HepG2 (cell line): ENCODE measurements at regions of chr6 and their contacts with region 1.

Region 1: GRCh38 chr6:131694831-131695426 is 6.3 kb downstream of the OR2A4 start:
- DNase-seq: peak; percentile 77
- ATAC-seq: peak; percentile 100
- H3K4me3 ChIP-seq: no peak overlapping the region
- H3K27ac ChIP-seq: no peak overlapping the region
- H3K4me1 ChIP-seq: no peaks in the 10 kb centered on the region
- H3K27me3 ChIP-seq: no peaks in the 10 kb centered on the region
- CTCF ChIP-seq: peak; percentile 93
- EP300 ChIP-seq: no peak
- POLR2A ChIP-seq: no peak
- RAD21 ChIP-seq: peak; percentile 91

Region 2: GRCh38 chr6:131669891-131670290 is 25.0 kb before region 1 on chr6:
- CTCF ChIA-PET with region 1: no interaction called
- POLR2A ChIA-PET with region 1: no interaction called
- in situ Hi-C with region 1: no loop called
- intact Hi-C with region 1: no loop called
- DNase-seq: no peak
- ATAC-seq: no peak
- H3K4me3 ChIP-seq: no peak overlapping the region
- H3K27ac ChIP-seq: no peak overlapping the region
- H3K4me1 ChIP-seq: no peaks in the 10 kb centered on the region
- H3K27me3 ChIP-seq: no peaks in the 10 kb centered on the region
- CTCF ChIP-seq: no peak
- EP300 ChIP-seq: no peak
- POLR2A ChIP-seq: no peak
- RAD21 ChIP-seq: no peak

Region 3: GRCh38 chr6:131787766-131788712 is 93.1 kb after region 1 on chr6:
- CTCF ChIA-PET with region 1: interaction called, 7 read pairs
- POLR2A ChIA-PET with region 1: no interaction called
- in situ Hi-C with region 1: loop called (anchors 5 kb)
- intact Hi-C with region 1: loop called (anchors 5 kb)
- DNase-seq: peak; percentile 47
- ATAC-seq: peak; percentile 93
- H3K4me3 ChIP-seq: no peak overlapping the region
- H3K27ac ChIP-seq: peak overlapping the region; percentile 17
- H3K4me1 ChIP-seq: peaks cover 27% of the 10 kb centered on the region
- H3K27me3 ChIP-seq: no peaks in the 10 kb centered on the region
- CTCF ChIP-seq: peak; percentile 57
- EP300 ChIP-seq: no peak
- POLR2A ChIP-seq: no peak
- RAD21 ChIP-seq: peak; percentile 68

Region 4: GRCh38 chr6:131867744-131868143 is 172.8 kb after region 1 on chr6:
- CTCF ChIA-PET with region 1: no interaction called
- POLR2A ChIA-PET with region 1: no interaction called
- in situ Hi-C with region 1: no loop called
- intact Hi-C with region 1: loop called (anchors 5 kb)
- DNase-seq: peak; percentile 92
- ATAC-seq: peak; percentile 75
- H3K4me3 ChIP-seq: no peak overlapping the region
- H3K27ac ChIP-seq: peak overlapping the region; percentile 28
- H3K4me1 ChIP-seq: peaks cover 39% of the 10 kb centered on the region
- H3K27me3 ChIP-seq: no peaks in the 10 kb centered on the region
- CTCF ChIP-seq: no peak
- EP300 ChIP-seq: peak in 1 of 2 experiments; percentile 63; a peak in 2 of 4 replicates
- POLR2A ChIP-seq: no peak
- RAD21 ChIP-seq: no peak

Region 5: GRCh38 chr6:131979515-131980337 is 284.8 kb after region 1 on chr6:
- CTCF ChIA-PET with region 1: no interaction called
- POLR2A ChIA-PET with region 1: no interaction called
- in situ Hi-C with region 1: no loop called
- intact Hi-C with region 1: no loop called
- DNase-seq: no peak
- ATAC-seq: no peak
- H3K4me3 ChIP-seq: no peak overlapping the region
- H3K27ac ChIP-seq: peak overlapping the region; percentile 98
- H3K4me1 ChIP-seq: peaks cover 97% of the 10 kb centered on the region
- H3K27me3 ChIP-seq: no peaks in the 10 kb centered on the region
- CTCF ChIP-seq: no peak
- EP300 ChIP-seq: no peak
- POLR2A ChIP-seq: no peak
- RAD21 ChIP-seq: no peak

Region 6: GRCh38 chr6:132218059-132218696 is 523.2 kb after region 1 on chr6:
- CTCF ChIA-PET with region 1: no interaction called
- POLR2A ChIA-PET with region 1: no interaction called
- in situ Hi-C with region 1: loop called (anchors 25 kb)
- intact Hi-C with region 1: no loop called
- DNase-seq: peak; percentile 25
- ATAC-seq: no peak
- H3K4me3 ChIP-seq: no peak overlapping the region
- H3K27ac ChIP-seq: no peak overlapping the region
- H3K4me1 ChIP-seq: no peaks in the 10 kb centered on the region
- H3K27me3 ChIP-seq: peaks cover 0 to 6% of the 10 kb centered on the region in 2 experiments; a peak in 2 of 5 replicates
- CTCF ChIP-seq: peak; percentile 44
- EP300 ChIP-seq: no peak
- POLR2A ChIP-seq: no peak
- RAD21 ChIP-seq: peak; percentile 55